PC-3 (cell line): ENCODE measurements at regions of chr9 and their contacts with region 1.

Region 1: GRCh38 chr9:109307380-109308240 is 13.2 kb downstream of the EPB41L4B start:
- DNase-seq: peak; percentile 78
- ATAC-seq: peak; percentile 91
- H3K4me3 ChIP-seq: no peak overlapping the region
- H3K27ac ChIP-seq: no peak overlapping the region
- H3K4me1 ChIP-seq: peaks cover 25% of the 10 kb centered on the region
- H3K27me3 ChIP-seq: no peaks in the 10 kb centered on the region
- CTCF ChIP-seq: no peak

Region 2: GRCh38 chr9:109274884-109275730 is 32.5 kb before region 1 on chr9:
- CTCF ChIA-PET with region 1: no interaction called
- POLR2A ChIA-PET with region 1: interaction called, 21 read pairs
- intact Hi-C with region 1: no loop called
- DNase-seq: no peak
- ATAC-seq: no peak
- H3K4me3 ChIP-seq: no peak overlapping the region
- H3K27ac ChIP-seq: no peak overlapping the region
- H3K4me1 ChIP-seq: no peaks in the 10 kb centered on the region
- H3K27me3 ChIP-seq: no peaks in the 10 kb centered on the region
- CTCF ChIP-seq: no peak